Mucosa of descending colon (tissue), 3 donors: ENCODE measurements at regions of chr22 and their contacts with region 1.

Region 1: DNA sequence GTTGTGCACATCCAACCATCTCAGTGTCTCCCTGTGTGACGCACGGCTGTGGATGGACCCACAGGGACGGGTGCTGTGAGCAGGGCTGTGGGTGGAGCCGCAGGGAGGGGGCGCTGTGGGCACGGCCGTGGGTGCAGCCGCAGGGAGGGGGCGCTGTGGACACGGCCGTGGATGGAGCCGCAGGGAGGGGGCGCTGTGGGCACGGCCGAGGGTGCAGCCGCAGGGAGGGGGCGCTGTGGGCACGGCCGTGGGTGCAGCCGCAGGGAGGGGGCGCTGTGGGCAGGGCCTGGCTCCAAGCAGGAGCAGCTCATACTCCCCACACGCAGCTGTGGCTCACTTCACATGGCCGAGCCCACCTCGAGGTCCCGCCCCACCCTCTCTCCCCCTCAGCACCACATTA is 6.0 kb upstream of the MAPK11 start:
- DNase-seq: peak in 2 of 3 donors; percentile 79 to 82
- ATAC-seq: peak; percentile 72
- H3K4me3 ChIP-seq: no peak overlapping the region
- H3K4me1 ChIP-seq: peaks cover 10% of the 10 kb centered on the region
- CTCF ChIP-seq: peak; percentile 39

Region 2: DNA sequence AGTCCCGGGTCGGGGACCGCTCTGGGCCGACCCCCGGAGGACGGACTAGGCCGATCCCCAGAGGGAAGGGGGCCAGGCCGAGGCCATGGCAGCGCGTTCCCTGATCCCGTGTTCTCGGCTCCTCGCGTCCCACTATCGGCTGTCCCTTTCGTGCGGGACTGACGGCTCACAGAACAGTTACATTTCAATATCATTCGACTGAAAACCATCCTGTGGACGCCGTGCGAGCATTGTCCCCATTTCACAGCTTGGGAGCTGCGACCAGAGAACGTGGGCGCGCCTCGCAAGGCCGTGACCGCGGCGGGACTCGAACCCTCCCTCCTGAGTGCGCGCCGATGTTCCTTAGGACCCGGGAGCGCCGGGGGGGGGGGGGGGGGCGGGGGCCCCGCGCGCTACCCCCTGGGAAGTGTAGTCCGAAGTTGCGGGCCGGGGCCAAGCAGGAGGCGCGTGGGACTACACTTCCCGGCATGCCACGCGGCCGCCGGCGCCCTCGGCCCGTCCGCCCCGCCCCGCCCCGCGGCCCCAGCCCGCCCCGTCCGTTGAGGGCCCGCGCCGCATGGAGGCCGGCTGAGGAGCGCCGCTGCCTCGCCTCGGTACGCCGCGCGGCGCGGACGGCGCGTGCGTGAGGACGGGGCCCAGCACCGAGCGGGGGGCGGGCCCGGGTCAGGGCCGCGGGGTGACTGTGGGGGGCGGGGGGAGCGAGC is 90.6 kb before region 1 on chr22 and contains the start of gene TRABD:
- intact Hi-C with region 1: no loop called
- DNase-seq: peak; percentile 88 to 94 (median 93)
- ATAC-seq: peak; percentile 72
- H3K4me3 ChIP-seq: peak within 1 kb of the TSS; percentile 38
- H3K4me1 ChIP-seq: peaks cover 39% of the 10 kb centered on the region
- CTCF ChIP-seq: no peak
- total RNA-seq, gene TRABD: 36.8 to 52.6 (median 42.7) TPM

Region 3: DNA sequence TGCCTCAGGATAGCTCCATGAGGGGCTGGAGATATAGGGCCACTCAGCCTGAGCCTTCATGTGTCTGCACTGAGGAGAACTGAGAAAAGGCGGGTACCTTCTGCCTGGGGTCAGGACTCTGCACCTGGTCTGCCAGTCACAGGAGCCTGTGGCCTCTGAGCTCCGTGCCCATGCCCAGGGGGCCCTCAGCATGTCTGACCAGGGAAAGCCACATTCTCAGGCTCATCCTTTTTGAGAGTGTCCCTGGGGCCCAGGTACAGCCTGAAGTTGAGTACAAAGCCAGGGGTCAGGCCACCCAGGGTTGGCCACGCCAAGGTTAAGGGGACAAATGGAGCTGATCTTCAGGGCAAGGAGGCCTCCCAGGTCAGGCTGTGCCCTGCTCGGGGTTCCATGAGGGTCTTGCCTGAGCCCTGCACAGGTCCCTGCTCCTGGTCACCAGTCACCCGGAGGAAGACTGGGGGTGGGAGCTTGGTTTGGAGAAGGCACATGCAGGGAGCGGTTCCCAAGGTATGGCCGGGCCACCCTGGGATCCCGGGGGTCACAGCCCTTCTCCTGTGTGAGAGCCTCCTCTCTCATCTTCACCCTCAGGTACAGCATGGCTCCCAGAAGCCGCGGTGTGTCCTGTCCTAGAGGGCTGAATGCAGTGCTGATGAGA is 44.7 kb after region 1 on chr22:
- intact Hi-C with region 1: loop called (anchors 5 kb)
- DNase-seq: peak in 2 of 3 donors; percentile 23 to 42
- ATAC-seq: peak; percentile 9
- H3K4me3 ChIP-seq: no peak overlapping the region
- H3K4me1 ChIP-seq: no peaks in the 10 kb centered on the region
- CTCF ChIP-seq: no peak

Region 4: GRCh38 chr22:50326959-50327710 is 51.0 kb after region 1 on chr22 and contains the start of gene DENND6B:
- intact Hi-C with region 1: loop called (anchors 5 kb)
- DNase-seq: peak; percentile 83 to 89 (median 85)
- ATAC-seq: peak; percentile 97
- H3K4me3 ChIP-seq: peak within 1 kb of the TSS; percentile 50
- H3K4me1 ChIP-seq: peaks cover 11% of the 10 kb centered on the region
- CTCF ChIP-seq: peak; percentile 72
- total RNA-seq, gene DENND6B: 2.8 to 6.3 (median 5.2) TPM

Region 5: DNA sequence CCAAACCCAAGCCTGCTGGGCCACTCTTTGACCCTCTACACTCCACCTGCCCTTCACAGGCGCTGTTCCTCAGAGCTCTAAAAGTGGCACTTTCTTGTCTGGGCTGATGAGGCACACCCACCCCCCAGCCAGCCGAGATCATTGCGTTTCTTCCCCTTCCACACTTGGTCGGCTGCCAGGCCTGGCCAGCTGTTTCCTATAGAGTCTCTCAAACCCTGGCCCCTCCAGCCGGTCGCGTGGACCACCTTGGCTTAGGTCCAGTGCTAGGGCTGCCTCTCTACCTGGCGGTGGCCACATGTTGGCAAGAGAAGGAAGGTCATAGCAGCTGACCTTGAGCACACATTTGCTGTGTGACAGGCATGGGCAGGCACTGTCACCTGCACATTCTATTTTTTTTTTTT is 127.6 kb after region 1 on chr22:
- intact Hi-C with region 1: no loop called
- DNase-seq: peak in 2 of 3 donors; percentile 41 to 53
- ATAC-seq: peak; percentile 23
- H3K4me3 ChIP-seq: no peak overlapping the region
- H3K4me1 ChIP-seq: peaks cover 6% of the 10 kb centered on the region
- CTCF ChIP-seq: no peak